ENCODE measurements at regions of chr2 and their contacts with region 1.

Region 1: DNA sequence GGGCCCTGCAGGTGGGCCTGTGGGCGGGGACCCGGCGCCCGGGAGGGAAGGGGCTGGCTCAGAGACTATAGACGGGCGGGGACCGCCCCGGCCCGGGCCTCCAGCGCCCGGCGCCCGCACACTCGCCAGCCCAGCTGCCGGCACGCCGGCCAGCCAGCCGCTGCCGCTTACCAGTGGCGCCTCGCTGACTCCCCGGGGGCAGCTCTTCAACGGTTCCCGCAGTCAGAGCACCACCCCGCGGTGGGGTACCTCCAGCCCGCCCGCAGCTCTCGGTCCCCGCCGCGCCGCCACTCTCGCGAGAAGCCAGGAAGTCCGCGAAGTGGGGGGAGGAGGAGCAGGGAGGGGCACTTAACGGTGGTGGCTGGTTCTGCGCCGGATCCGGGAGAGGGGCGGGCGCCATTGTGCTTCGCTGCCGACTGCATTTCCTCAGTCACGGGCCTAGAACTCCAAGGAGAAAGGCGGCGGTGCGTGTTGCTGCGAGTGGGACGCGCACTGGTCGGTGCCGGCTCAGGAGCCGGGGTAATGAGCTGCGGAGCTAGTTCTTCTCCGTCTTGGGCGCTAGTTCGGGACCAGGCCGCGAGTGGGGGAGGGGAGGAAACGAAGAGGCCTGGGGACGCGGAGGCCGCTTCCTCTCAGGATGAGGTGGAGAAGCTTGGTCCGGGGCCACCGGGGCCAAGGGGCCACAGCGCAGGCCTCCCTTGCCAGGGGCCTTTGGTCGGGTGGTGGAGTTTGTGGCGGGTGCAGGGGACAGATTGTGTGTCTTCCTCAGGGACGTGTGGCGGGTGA is at the start of gene MARCHF7:
- DNase-seq: peak; percentile 96
- H3K4me3 Mint-ChIP-seq: peak within 1 kb of the TSS; percentile 100
- H3K27ac Mint-ChIP-seq: peak within 1 kb of the TSS; percentile 100
- H3K4me1 Mint-ChIP-seq: peaks cover 16% of the 10 kb centered on the region
- H3K27me3 Mint-ChIP-seq: no peaks in the 10 kb centered on the region
- CTCF ChIP-seq: peak; percentile 67
- total RNA-seq, gene MARCHF7: 76.0 and 78.4 TPM in 2 replicates

Region 2: DNA sequence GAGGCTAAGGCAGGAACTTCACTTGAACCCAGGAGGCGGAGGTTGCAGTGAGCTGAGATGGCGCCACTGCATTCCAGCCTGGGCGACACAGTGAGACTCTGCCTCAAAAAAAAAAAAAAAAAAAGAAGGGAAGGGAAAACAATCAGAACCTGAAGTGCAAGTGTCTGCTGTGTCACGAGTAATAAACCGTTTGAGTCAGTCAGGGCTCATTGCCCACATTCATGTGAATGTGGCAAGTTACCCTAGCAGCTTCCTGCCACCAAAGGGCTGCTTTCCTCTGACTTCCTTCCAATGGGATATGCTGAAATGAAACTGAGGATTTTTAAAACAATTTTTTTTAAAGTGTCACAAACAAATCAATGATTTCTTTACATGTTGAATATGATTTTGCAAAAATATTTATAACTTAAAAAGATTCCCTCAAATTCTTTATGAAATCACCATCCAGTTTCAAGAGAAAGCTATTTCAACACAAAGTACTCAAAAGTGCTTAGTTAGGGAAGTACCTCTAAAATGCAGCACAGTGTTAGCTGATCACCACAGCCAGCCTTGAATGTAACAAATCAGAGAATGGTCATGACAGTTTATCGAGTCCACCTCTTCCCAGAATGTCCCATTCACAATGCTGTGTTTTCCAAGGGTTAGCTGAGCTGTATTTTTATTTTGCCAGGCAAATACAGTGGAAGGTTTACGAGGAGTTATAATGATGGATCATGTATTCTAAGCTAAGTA is 462.2 kb before region 1 on chr2:
- CTCF ChIA-PET with region 1: no interaction called
- POLR2A ChIA-PET with region 1: interaction called, 17 read pairs
- intact Hi-C with region 1: no loop called
- DNase-seq: peak; percentile 89
- H3K4me3 Mint-ChIP-seq: no peak overlapping the region
- H3K27ac Mint-ChIP-seq: peak overlapping the region; percentile 66
- H3K4me1 Mint-ChIP-seq: peaks cover 6% of the 10 kb centered on the region
- H3K27me3 Mint-ChIP-seq: no peaks in the 10 kb centered on the region
- CTCF ChIP-seq: no peak

Region 3: DNA sequence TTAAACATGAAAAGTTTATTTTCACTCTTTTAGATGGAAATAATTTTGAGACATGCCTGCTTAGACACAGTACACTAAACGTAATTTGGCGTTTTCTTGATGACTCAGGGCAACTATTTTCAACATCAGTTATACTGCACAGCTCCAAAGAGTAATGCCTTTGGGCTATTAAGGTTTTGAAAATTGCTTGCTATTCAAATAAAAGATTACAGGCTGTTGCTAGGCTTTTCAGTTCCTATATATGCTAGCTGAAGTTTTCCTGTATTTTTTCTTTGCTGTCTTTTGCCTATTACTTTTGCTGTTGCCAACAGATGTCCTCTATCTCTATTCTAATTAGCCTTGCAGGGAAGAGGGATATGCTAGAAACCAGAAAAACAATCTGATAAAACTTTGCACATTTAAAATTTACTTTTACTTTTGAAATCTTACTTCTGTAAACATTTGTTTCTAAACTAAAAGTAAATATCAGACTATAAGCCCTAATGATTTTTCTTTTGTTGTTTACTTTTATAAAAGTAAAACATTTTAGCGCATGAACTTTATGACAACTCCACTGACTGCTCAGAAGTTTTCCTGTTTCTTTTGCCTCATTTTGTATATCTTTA is 312.4 kb before region 1 on chr2:
- CTCF ChIA-PET with region 1: no interaction called
- POLR2A ChIA-PET with region 1: interaction called, 12 read pairs
- intact Hi-C with region 1: no loop called
- DNase-seq: peak; percentile 53
- H3K4me3 Mint-ChIP-seq: no peak overlapping the region
- H3K27ac Mint-ChIP-seq: peak overlapping the region; percentile 9
- H3K4me1 Mint-ChIP-seq: no peaks in the 10 kb centered on the region
- H3K27me3 Mint-ChIP-seq: no peaks in the 10 kb centered on the region
- CTCF ChIP-seq: no peak

Region 4: DNA sequence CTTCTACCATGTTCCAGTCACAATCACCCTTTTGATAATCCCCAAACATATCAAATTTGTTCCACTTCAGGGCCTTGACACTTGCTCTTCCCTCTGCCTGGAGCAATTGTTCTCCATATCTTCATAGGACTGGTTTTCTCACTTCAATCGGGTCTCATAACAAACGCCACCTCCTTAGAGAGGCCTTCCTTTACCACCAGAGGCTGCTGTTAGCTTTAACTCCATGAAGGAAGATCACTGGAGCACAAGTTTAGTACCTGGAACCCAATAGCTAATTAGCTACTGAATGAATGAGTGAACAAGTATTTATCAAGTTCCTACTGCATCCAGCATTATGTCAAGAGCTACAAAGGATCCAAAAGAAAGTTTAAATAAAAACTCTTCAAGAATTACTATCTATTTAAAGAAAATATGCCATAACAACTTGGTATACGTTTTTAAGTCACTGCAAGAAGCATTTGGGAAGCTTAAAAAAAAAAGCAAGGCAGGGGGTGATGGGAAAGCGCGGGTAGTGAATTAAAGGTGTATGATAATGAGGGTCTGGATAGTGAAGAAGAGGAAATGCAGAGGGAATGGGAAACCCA is 154.8 kb before region 1 on chr2:
- CTCF ChIA-PET with region 1: interaction called, 9 read pairs
- POLR2A ChIA-PET with region 1: interaction called, 9 read pairs
- intact Hi-C with region 1: loop called (anchors 1 kb)
- DNase-seq: peak; percentile 45
- H3K4me3 Mint-ChIP-seq: no peak overlapping the region
- H3K27ac Mint-ChIP-seq: no peak overlapping the region
- H3K4me1 Mint-ChIP-seq: no peaks in the 10 kb centered on the region
- H3K27me3 Mint-ChIP-seq: no peaks in the 10 kb centered on the region
- CTCF ChIP-seq: peak; percentile 48

Region 5: GRCh38 chr2:159600752-159601151 is 111.6 kb before region 1 on chr2:
- CTCF ChIA-PET with region 1: interaction called, 4 read pairs
- POLR2A ChIA-PET with region 1: interaction called, 21 read pairs
- intact Hi-C with region 1: no loop called
- DNase-seq: peak; percentile 86
- H3K4me3 Mint-ChIP-seq: peak overlapping the region; percentile 2
- H3K27ac Mint-ChIP-seq: peak overlapping the region; percentile 20
- H3K4me1 Mint-ChIP-seq: peaks cover 11% of the 10 kb centered on the region
- H3K27me3 Mint-ChIP-seq: no peaks in the 10 kb centered on the region
- CTCF ChIP-seq: no peak

Region 6: GRCh38 chr2:159695795-159696448 is 16.4 kb before region 1 on chr2:
- CTCF ChIA-PET with region 1: no interaction called
- POLR2A ChIA-PET with region 1: interaction called, 23 read pairs
- intact Hi-C with region 1: no loop called
- DNase-seq: no peak
- H3K4me3 Mint-ChIP-seq: no peak overlapping the region
- H3K27ac Mint-ChIP-seq: no peak overlapping the region
- H3K4me1 Mint-ChIP-seq: no peaks in the 10 kb centered on the region
- H3K27me3 Mint-ChIP-seq: no peaks in the 10 kb centered on the region
- CTCF ChIP-seq: no peak

Region 7: GRCh38 chr2:159736048-159736447 is 23.7 kb after region 1 on chr2:
- CTCF ChIA-PET with region 1: interaction called, 5 read pairs
- POLR2A ChIA-PET with region 1: interaction called, 42 read pairs
- intact Hi-C with region 1: no loop called
- DNase-seq: no peak
- H3K4me3 Mint-ChIP-seq: no peak overlapping the region
- H3K27ac Mint-ChIP-seq: peak overlapping the region; percentile 71
- H3K4me1 Mint-ChIP-seq: peaks cover 5% of the 10 kb centered on the region
- H3K27me3 Mint-ChIP-seq: no peaks in the 10 kb centered on the region
- CTCF ChIP-seq: no peak

Region 8: GRCh38 chr2:159804941-159805340 is 92.6 kb after region 1 on chr2:
- CTCF ChIA-PET with region 1: no interaction called
- POLR2A ChIA-PET with region 1: no interaction called
- intact Hi-C with region 1: no loop called
- DNase-seq: no peak
- H3K4me3 Mint-ChIP-seq: no peak overlapping the region
- H3K27ac Mint-ChIP-seq: no peak overlapping the region
- H3K4me1 Mint-ChIP-seq: no peaks in the 10 kb centered on the region
- H3K27me3 Mint-ChIP-seq: peaks cover 39% of the 10 kb centered on the region
- CTCF ChIP-seq: no peak

Region 9: GRCh38 chr2:160252278-160252887 is 540.0 kb after region 1 on chr2:
- CTCF ChIA-PET with region 1: no interaction called
- POLR2A ChIA-PET with region 1: no interaction called
- intact Hi-C with region 1: no loop called
- DNase-seq: peak; percentile 49
- H3K4me3 Mint-ChIP-seq: no peak overlapping the region
- H3K27ac Mint-ChIP-seq: no peak overlapping the region
- H3K4me1 Mint-ChIP-seq: peaks cover 23% of the 10 kb centered on the region
- H3K27me3 Mint-ChIP-seq: no peaks in the 10 kb centered on the region
- CTCF ChIP-seq: peak; percentile 54

Region 10: DNA sequence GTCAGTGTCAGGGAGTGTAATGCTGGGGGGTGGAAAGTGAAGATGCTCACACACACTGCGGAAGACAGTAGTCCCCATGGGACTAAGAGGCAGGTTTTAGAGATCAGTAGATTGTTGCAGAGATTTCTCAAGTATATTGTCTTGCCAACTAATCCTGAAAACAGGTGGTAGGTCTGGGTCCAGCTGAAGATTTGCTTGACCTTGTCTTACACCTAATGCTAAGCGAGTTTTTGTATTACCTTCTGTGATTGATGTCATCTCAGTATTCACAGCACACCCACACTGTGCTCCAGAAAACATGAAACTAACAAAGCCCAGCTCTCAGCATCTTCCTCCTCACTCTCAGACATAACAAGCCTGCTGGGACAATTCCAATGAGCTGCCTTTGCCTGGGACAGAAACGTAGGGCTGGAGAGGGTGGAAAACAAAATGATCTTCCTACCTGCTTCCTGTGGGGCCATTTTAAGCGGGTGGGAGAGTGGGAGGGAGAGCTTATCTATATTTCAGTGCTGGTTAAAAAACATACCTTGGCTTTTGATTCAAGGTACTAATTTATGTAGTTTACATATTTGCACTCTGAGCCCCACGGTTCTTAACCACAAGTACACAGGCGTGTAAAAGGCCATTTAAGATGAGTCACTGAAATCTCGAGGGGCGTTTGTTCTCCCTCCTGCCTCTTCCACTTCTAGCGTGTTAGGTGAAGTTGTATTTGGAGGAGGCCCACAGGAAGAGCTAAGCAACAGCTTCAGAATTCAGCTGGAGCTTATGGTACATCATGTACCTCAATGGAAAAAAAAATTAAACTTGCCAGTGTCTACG is 804.4 kb after region 1 on chr2:
- CTCF ChIA-PET with region 1: no interaction called
- POLR2A ChIA-PET with region 1: no interaction called
- intact Hi-C with region 1: no loop called
- DNase-seq: peak; percentile 26
- H3K4me3 Mint-ChIP-seq: no peak overlapping the region
- H3K27ac Mint-ChIP-seq: peak overlapping the region; percentile 18
- H3K4me1 Mint-ChIP-seq: peaks cover 12% of the 10 kb centered on the region
- H3K27me3 Mint-ChIP-seq: no peaks in the 10 kb centered on the region
- CTCF ChIP-seq: no peak

Measured in MCF 10A (cell line).